ENCODE measurements at regions of chr4 and their contacts with region 1.

Region 1: GRCh38 chr4:38889143-38889542 is 21.5 kb downstream of the FAM114A1 start:
- DNase-seq: no peak
- H3K4me3 Mint-ChIP-seq: peak overlapping the region; percentile 46
- H3K27ac Mint-ChIP-seq: peak overlapping the region; percentile 88
- H3K4me1 Mint-ChIP-seq: peaks cover 23% of the 10 kb centered on the region
- H3K27me3 Mint-ChIP-seq: no peaks in the 10 kb centered on the region

Region 2: DNA sequence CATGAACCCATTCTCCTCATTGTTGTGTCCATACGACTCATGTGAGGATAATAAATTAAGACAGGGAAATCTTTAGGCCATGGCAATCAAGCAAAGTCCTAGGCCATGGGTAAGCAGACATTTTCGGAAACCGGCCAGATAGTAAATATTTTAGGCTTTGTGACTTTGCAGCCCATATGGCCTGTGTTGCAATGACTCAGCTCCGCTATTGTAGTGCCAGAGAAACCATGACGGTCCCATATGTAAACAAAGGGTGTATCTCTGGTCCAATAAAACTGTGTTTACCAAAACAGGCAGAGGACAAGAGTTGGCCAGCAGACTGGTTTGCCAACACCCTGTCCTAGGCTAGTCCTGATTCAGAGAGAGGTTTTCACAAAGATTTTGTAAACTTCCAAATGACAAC is 16.5 kb before region 1 on chr4:
- CTCF ChIA-PET with region 1: interaction called, 10 read pairs
- intact Hi-C with region 1: no loop called
- DNase-seq: no peak
- H3K4me3 Mint-ChIP-seq: no peak overlapping the region
- H3K27ac Mint-ChIP-seq: no peak overlapping the region
- H3K4me1 Mint-ChIP-seq: no peaks in the 10 kb centered on the region
- H3K27me3 Mint-ChIP-seq: peaks cover 16% of the 10 kb centered on the region

Region 3: DNA sequence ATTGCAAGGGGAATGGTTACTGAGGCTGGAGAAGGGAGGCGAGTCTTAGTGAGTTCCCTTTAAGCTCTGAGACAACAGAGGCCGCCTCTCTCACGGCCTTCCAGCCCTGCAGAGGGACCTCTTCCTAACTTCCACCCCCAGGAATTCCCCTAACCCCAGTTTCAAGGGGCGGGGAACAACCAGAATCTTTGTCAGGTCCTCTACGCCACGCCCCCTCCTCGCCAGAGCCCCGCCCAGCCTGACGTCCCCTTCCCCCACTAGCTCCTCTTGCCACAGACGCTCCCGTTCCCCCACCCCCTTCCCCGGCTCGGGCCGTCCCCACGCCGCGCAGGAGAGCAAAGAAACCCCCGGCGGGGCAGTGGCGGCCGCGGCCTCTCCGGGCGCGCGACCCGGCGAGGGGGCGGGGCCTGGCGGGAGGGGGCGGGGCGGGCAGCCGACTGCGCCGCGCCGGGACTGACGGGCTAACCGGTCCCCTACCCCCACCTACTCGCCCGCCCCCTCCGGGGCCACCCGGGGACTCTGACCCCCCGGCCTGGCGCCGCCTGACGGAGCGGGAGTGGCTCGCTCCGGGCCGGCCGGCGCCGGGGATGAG is 155.3 kb after region 1 on chr4:
- CTCF ChIA-PET with region 1: no interaction called
- intact Hi-C with region 1: loop called (anchors 1 kb)
- DNase-seq: peak; percentile 99
- H3K4me3 Mint-ChIP-seq: peak overlapping the region; percentile 83
- H3K27ac Mint-ChIP-seq: peak overlapping the region; percentile 92
- H3K4me1 Mint-ChIP-seq: peaks cover 51% of the 10 kb centered on the region
- H3K27me3 Mint-ChIP-seq: no peaks in the 10 kb centered on the region

Region 4: GRCh38 chr4:39103291-39103690 is 214.1 kb after region 1 on chr4:
- CTCF ChIA-PET with region 1: no interaction called
- intact Hi-C with region 1: no loop called
- DNase-seq: no peak
- H3K4me3 Mint-ChIP-seq: no peak overlapping the region
- H3K27ac Mint-ChIP-seq: no peak overlapping the region
- H3K4me1 Mint-ChIP-seq: no peaks in the 10 kb centered on the region
- H3K27me3 Mint-ChIP-seq: no peaks in the 10 kb centered on the region

Region 5: GRCh38 chr4:39638354-39639240 is 749.5 kb after region 1 on chr4 and contains the start of gene SMIM14:
- CTCF ChIA-PET with region 1: no interaction called
- intact Hi-C with region 1: no loop called
- DNase-seq: peak; percentile 93
- H3K4me3 Mint-ChIP-seq: peak within 1 kb of the TSS; percentile 85
- H3K27ac Mint-ChIP-seq: peak within 1 kb of the TSS; percentile 69
- H3K4me1 Mint-ChIP-seq: peaks cover 24% of the 10 kb centered on the region
- H3K27me3 Mint-ChIP-seq: no peaks in the 10 kb centered on the region
- total RNA-seq, gene SMIM14: 2.7 to 3.9 TPM

Measured in activated naive CD4-positive, alpha-beta T cell treated with anti-CD3 and anti-CD28 coated beads for 36 hours (primary cell).